CD8-positive, alpha-beta T cell (primary cell): ENCODE measurements at regions of chr4 and their contacts with region 1.

Region 1: GRCh38 chr4:108570993-108571569 is 49.3 kb upstream of the RPL34 start:
- DNase-seq: no peak
- ATAC-seq: no peak
- H3K4me3 ChIP-seq: no peak overlapping the region
- H3K4me3 Mint-ChIP-seq: no peak overlapping the region
- H3K27ac ChIP-seq: no peak overlapping the region
- H3K27ac Mint-ChIP-seq: no peak overlapping the region
- H3K4me1 ChIP-seq: peaks cover 26% of the 10 kb centered on the region
- H3K4me1 Mint-ChIP-seq: peaks cover 31% of the 10 kb centered on the region
- H3K27me3 ChIP-seq: peaks cover 0 to 2% of the 10 kb centered on the region in 2 experiments
- H3K27me3 Mint-ChIP-seq: no peaks in the 10 kb centered on the region
- CTCF ChIP-seq: no peak

Region 2: GRCh38 chr4:108018040-108018883 is 552.8 kb before region 1 on chr4:
- CTCF ChIA-PET with region 1: interaction called, 172 read pairs
- POLR2A ChIA-PET with region 1: interaction called, 12 read pairs
- intact Hi-C with region 1: loop called (anchors 1 kb)
- DNase-seq: peak; percentile 61 to 90 (median 81)
- ATAC-seq: peak; percentile 88
- H3K4me3 ChIP-seq: no peak overlapping the region
- H3K4me3 Mint-ChIP-seq: no peak overlapping the region
- H3K27ac ChIP-seq: no peak overlapping the region
- H3K27ac Mint-ChIP-seq: no peak overlapping the region
- H3K4me1 ChIP-seq: peaks cover 4% of the 10 kb centered on the region
- H3K4me1 Mint-ChIP-seq: peaks cover 15% of the 10 kb centered on the region
- H3K27me3 ChIP-seq: no peaks in the 10 kb centered on the region
- H3K27me3 Mint-ChIP-seq: no peaks in the 10 kb centered on the region
- CTCF ChIP-seq: peak; percentile 82

Region 3: DNA sequence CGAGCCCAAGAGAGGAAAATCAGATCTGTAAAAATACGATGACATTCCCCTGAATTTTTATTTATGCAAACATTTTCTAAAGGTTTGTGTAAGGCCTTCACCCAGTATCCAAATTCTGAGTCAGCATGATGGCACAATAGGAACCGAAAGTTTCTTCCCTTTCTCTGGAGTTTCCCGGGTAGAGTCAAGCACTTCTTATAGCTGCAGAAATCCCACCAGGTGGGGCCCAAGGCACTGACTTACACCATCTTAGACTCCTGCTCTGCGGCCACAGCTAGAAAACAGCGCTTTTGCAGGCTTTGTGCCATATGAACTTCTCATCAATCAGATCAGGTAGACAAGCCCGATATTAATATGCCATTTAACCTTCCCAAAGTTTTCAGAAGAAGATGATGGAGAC is 415.7 kb before region 1 on chr4:
- CTCF ChIA-PET with region 1: interaction called, 12 read pairs
- POLR2A ChIA-PET with region 1: no interaction called
- intact Hi-C with region 1: loop called in 1 of 2 experiments (anchors 1 kb)
- DNase-seq: peak in 5 of 9 experiments; percentile 43 to 81 (median 58)
- ATAC-seq: peak; percentile 66
- H3K4me3 ChIP-seq: peak overlapping the region in 1 of 2 experiments; percentile 29
- H3K4me3 Mint-ChIP-seq: peak overlapping the region; percentile 66
- H3K27ac ChIP-seq: peak overlapping the region in 1 of 2 experiments; percentile 21
- H3K27ac Mint-ChIP-seq: peak overlapping the region; percentile 88
- H3K4me1 ChIP-seq: peaks cover 85% of the 10 kb centered on the region
- H3K4me1 Mint-ChIP-seq: peaks cover 84% of the 10 kb centered on the region
- H3K27me3 ChIP-seq: peaks cover 0 to 4% of the 10 kb centered on the region in 2 experiments
- H3K27me3 Mint-ChIP-seq: no peaks in the 10 kb centered on the region
- CTCF ChIP-seq: peak; percentile 35

Region 4: GRCh38 chr4:108370291-108371141 is 200.6 kb before region 1 on chr4:
- CTCF ChIA-PET with region 1: interaction called, 5 read pairs
- POLR2A ChIA-PET with region 1: no interaction called
- intact Hi-C with region 1: loop called in 1 of 2 experiments (anchors 5 kb)
- DNase-seq: peak in 8 of 9 experiments; percentile 16 to 77 (median 44)
- ATAC-seq: peak; percentile 78
- H3K4me3 ChIP-seq: peak overlapping the region; percentile 40 to 51
- H3K4me3 Mint-ChIP-seq: peak overlapping the region; percentile 91
- H3K27ac ChIP-seq: peak overlapping the region in 1 of 2 experiments; percentile 14
- H3K27ac Mint-ChIP-seq: peak overlapping the region; percentile 88
- H3K4me1 ChIP-seq: peaks cover 37% of the 10 kb centered on the region
- H3K4me1 Mint-ChIP-seq: peaks cover 43% of the 10 kb centered on the region
- H3K27me3 ChIP-seq: peaks cover 0 to 8% of the 10 kb centered on the region in 2 experiments
- H3K27me3 Mint-ChIP-seq: no peaks in the 10 kb centered on the region
- CTCF ChIP-seq: no peak

Region 5: DNA sequence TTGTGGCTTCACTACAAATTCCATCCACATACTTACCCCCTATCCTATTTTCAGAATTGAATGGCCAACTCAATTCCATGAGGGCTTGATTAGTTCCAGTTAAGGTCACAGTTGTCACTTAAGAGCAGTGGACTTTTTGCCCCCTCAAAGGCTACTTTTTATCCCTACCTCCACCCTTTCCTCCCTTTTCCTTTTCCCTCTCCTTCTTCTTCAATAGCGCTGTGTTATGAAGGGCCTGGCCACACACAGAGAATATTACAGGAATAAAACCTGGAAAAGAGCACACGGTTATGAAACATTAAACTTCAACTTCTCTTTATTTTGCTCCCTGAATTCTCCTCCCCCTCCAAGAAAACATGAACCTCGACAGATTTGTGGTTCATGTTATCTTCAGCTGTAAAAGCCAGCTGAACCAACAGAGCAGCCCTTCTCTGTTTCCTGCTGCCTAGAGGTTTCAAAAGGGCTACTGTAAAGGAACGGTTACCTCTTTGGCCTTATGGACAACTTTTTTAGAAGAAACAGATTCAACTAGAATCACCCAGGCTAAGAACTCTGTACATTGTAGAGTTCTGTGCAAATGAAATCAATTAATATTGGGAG is 37.7 kb before region 1 on chr4:
- CTCF ChIA-PET with region 1: interaction called, 16 read pairs
- POLR2A ChIA-PET with region 1: interaction called, 4 read pairs
- intact Hi-C with region 1: loop called in 1 of 2 experiments (anchors 5 kb)
- DNase-seq: no peak
- ATAC-seq: no peak
- H3K4me3 ChIP-seq: no peak overlapping the region
- H3K4me3 Mint-ChIP-seq: peak overlapping the region; percentile 38
- H3K27ac ChIP-seq: no peak overlapping the region
- H3K27ac Mint-ChIP-seq: peak overlapping the region; percentile 27
- H3K4me1 ChIP-seq: peaks cover 79% of the 10 kb centered on the region
- H3K4me1 Mint-ChIP-seq: peaks cover 78% of the 10 kb centered on the region
- H3K27me3 ChIP-seq: no peaks in the 10 kb centered on the region
- H3K27me3 Mint-ChIP-seq: no peaks in the 10 kb centered on the region
- CTCF ChIP-seq: no peak

Region 6: DNA sequence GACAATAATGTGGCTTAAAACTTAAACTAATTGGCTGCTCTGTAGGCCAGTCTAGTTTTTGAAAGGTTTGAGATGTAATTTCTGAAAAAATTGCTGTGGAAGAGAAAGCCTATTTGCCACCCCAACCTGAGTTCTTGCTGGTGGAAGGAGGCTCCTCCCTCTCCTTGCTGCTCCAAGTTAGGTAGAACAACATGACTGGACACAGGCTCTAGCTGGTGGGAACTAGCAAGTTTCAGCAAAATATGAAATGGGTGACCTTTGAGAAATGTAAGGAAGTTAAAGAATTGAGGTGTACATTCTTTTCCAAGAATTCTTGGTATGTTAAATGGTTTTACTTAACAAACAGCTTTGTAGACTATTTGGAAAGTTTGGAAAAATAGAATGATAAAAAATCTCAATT is 57.3 kb after region 1 on chr4:
- CTCF ChIA-PET with region 1: no interaction called
- POLR2A ChIA-PET with region 1: no interaction called
- intact Hi-C with region 1: no loop called
- DNase-seq: no peak
- ATAC-seq: no peak
- H3K4me3 ChIP-seq: no peak overlapping the region
- H3K4me3 Mint-ChIP-seq: no peak overlapping the region
- H3K27ac ChIP-seq: no peak overlapping the region
- H3K27ac Mint-ChIP-seq: peak overlapping the region; percentile 66
- H3K4me1 ChIP-seq: peaks cover 12% of the 10 kb centered on the region
- H3K4me1 Mint-ChIP-seq: peaks cover 18% of the 10 kb centered on the region
- H3K27me3 ChIP-seq: no peaks in the 10 kb centered on the region
- H3K27me3 Mint-ChIP-seq: no peaks in the 10 kb centered on the region
- CTCF ChIP-seq: no peak

Region 7: DNA sequence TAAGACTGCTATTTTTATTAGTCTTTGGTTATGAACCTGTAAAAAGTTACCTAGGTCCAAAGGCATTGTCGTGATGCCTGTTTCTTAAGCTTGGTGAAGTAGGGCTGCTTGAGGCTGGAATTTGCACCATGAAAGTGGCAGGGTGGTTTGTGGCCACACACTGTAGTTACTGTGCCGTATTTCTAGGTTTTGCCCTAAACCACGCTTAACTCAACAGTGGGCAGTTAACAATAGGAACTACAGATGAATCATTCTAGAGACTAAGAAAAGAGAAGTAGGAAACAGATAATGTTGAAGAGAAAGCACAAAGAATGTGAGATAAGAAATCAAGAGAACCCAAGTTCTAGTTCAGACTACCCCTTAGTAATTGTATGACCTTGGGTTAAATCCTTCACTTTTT is 180.2 kb after region 1 on chr4:
- CTCF ChIA-PET with region 1: no interaction called
- POLR2A ChIA-PET with region 1: no interaction called
- intact Hi-C with region 1: no loop called
- DNase-seq: no peak
- ATAC-seq: no peak
- H3K4me3 ChIP-seq: no peak overlapping the region
- H3K4me3 Mint-ChIP-seq: no peak overlapping the region
- H3K27ac ChIP-seq: no peak overlapping the region
- H3K27ac Mint-ChIP-seq: no peak overlapping the region
- H3K4me1 ChIP-seq: peaks cover 5% of the 10 kb centered on the region
- H3K4me1 Mint-ChIP-seq: peaks cover 4% of the 10 kb centered on the region
- H3K27me3 ChIP-seq: no peaks in the 10 kb centered on the region
- H3K27me3 Mint-ChIP-seq: no peaks in the 10 kb centered on the region
- CTCF ChIP-seq: no peak